A549 (cell line): ENCODE measurements at regions of chr12 and their contacts with region 1.

Region 1: DNA sequence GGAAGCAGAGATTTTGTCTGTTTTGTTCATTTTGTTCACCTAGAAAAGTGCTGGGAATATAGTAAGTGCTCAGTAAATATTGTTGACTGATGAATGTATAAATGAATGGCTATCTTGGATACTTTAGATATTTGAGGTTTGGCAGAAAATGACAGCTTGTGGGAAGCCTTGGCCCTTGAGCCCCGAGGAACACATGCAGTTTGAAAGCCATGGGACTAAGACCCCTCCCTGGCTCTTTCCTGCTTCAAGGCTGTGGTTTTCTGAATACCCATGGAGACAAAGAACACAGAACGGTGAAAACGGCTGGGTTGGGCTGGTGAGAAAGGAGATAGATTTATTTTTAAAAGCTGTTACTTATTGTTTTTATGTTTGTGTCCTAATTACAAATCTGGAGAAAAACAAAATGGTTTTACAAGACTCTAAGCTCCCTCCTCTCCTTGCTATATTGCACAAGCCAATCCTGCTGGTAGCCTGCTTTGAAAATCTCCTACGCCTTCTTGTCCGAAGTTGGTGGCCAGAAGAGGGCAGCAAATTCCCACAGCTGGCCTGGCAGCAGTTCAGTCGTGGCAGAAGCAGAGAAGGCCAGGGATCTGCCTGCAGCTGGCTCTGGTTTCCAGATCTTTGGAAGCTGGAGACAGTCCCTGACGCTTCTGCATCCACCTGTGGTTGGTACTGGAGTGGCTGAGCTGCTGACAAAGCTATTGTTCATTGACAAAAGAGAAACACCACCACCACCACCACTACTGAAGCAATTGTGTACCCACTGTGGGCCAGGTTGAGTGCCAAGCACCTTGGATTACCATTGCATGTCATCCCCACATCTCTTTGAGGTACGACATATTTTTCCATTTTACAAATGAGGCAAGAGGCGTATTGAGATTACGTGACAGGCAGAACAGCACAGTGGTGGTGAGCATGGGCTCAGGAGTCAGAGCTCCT is 5.2 kb upstream of the KRT85 start:
- DNase-seq: peak; percentile 93 to 95
- ATAC-seq: peak; percentile 95 to 97
- H3K4me3 ChIP-seq: no peak overlapping the region
- H3K27ac ChIP-seq: peak overlapping the region; percentile 34 to 67
- H3K4me1 ChIP-seq: peaks cover 10% of the 10 kb centered on the region; the same call in 1 of the 3 replicates
- CTCF ChIP-seq: peak; percentile 96
- EP300 ChIP-seq: no peak
- POLR2A ChIP-seq: no peak
- RAD21 ChIP-seq: peak; percentile 97 to 99

Region 2: DNA sequence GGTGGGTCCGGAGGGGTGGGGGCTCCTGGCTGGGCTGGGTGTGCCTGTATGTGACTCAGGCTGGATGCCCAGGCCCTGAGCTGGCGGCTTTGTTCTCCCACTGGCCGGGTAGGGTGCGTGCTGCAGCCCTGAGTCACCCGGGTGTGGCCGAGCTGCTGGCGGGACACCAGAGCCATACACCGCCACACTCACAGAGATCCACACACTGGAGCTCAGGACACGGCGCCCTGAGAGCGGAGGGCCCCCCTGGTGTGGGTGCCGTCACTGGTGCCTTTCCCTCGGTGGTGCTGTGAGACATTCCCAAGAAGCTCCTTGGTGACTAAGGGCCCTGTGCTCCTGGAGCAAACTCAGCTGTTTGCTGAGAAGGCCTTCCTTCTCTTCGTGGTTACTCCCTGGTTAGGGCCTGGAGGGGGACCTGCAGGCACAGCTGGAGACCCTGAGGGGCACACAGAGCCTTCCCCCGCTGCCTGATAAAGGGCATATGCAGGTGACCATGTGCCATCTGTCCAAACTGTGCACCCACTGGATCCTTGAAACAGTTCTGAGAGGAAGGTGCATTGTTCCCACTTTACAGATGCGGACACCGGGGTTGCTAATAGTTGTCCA is 225.0 kb before region 1 on chr12:
- CTCF ChIA-PET with region 1: interaction called, 23 read pairs
- POLR2A ChIA-PET with region 1: no interaction called
- DNase-seq: peak; percentile 96 to 100
- ATAC-seq: peak; percentile 46 to 71
- H3K4me3 ChIP-seq: no peak overlapping the region
- H3K27ac ChIP-seq: peak overlapping the region; percentile 100
- H3K4me1 ChIP-seq: peaks cover 93% of the 10 kb centered on the region
- CTCF ChIP-seq: no peak
- EP300 ChIP-seq: peak; percentile 97 to 99
- POLR2A ChIP-seq: no peak
- RAD21 ChIP-seq: peak in 1 of 2 experiments; percentile 42; a peak in 3 of 5 replicates

Region 3: GRCh38 chr12:52307836-52308805 is 64.4 kb before region 1 on chr12:
- CTCF ChIA-PET with region 1: interaction called, 11 read pairs
- POLR2A ChIA-PET with region 1: no interaction called
- DNase-seq: peak in 1 of 2 experiments; percentile 49
- ATAC-seq: peak; percentile 55 to 77
- H3K4me3 ChIP-seq: no peak overlapping the region
- H3K27ac ChIP-seq: peak overlapping the region; percentile 60 to 87
- H3K4me1 ChIP-seq: peaks cover 6% of the 10 kb centered on the region; the same call in 1 of the 3 replicates
- CTCF ChIP-seq: no peak
- EP300 ChIP-seq: no peak
- POLR2A ChIP-seq: no peak
- RAD21 ChIP-seq: no peak

Region 4: DNA sequence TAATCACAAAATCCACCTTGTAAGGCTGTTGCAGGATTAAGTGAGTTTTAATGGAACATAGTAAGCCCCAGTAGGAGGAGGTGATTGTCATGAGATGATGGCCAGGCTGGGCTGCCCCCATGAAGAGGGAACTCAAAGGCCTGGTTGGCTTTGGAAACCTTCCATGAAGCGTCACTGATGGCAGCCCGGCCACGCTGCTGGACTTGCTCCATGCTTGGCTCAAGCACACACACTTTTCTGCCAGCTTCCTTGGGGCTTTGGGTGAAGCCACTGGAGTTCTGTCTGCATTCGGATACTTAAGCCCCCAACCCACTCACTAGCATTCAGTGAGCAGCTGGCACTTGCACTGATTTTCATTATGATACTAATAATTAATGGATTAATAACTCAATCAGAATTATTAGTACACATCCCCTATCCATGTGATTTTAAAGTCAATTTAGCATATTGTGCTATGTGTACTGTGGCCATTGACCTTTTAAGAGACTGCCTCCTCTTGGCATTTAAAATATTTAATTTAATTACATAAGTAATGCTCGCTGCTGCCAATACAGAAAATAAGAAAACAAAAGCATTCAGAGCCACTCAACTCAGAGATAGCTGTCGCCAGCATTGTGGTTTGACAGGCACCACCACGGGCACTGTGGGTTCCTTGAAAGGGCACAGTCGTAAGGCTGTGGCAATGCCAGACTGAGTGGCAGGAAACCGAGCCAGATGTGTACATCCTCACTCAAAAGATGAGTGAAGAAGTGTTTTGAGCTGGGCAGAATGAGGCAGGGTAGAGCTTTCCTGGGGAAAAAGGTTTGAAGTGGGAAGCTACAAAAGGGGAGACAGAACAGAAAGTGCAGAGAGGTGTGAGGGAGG is 21.1 kb before region 1 on chr12:
- CTCF ChIA-PET with region 1: interaction called, 21 read pairs
- POLR2A ChIA-PET with region 1: no interaction called
- DNase-seq: no peak
- ATAC-seq: no peak
- H3K4me3 ChIP-seq: no peak overlapping the region
- H3K27ac ChIP-seq: no peak overlapping the region
- H3K4me1 ChIP-seq: peaks cover 1% of the 10 kb centered on the region; the same call in 1 of the 3 replicates
- CTCF ChIP-seq: no peak
- EP300 ChIP-seq: no peak
- POLR2A ChIP-seq: no peak
- RAD21 ChIP-seq: no peak

Region 5: GRCh38 chr12:52398176-52398829 is 25.8 kb after region 1 on chr12:
- CTCF ChIA-PET with region 1: interaction called, 24 read pairs
- POLR2A ChIA-PET with region 1: no interaction called
- DNase-seq: peak in 1 of 2 experiments; percentile 35
- ATAC-seq: peak in 1 of 2 experiments; percentile 40; a peak in 1 of 6 replicates
- H3K4me3 ChIP-seq: no peak overlapping the region
- H3K27ac ChIP-seq: no peak overlapping the region
- H3K4me1 ChIP-seq: peaks cover 6% of the 10 kb centered on the region; the same call in 1 of the 3 replicates
- CTCF ChIP-seq: no peak
- EP300 ChIP-seq: no peak
- POLR2A ChIP-seq: no peak
- RAD21 ChIP-seq: no peak

Region 6: DNA sequence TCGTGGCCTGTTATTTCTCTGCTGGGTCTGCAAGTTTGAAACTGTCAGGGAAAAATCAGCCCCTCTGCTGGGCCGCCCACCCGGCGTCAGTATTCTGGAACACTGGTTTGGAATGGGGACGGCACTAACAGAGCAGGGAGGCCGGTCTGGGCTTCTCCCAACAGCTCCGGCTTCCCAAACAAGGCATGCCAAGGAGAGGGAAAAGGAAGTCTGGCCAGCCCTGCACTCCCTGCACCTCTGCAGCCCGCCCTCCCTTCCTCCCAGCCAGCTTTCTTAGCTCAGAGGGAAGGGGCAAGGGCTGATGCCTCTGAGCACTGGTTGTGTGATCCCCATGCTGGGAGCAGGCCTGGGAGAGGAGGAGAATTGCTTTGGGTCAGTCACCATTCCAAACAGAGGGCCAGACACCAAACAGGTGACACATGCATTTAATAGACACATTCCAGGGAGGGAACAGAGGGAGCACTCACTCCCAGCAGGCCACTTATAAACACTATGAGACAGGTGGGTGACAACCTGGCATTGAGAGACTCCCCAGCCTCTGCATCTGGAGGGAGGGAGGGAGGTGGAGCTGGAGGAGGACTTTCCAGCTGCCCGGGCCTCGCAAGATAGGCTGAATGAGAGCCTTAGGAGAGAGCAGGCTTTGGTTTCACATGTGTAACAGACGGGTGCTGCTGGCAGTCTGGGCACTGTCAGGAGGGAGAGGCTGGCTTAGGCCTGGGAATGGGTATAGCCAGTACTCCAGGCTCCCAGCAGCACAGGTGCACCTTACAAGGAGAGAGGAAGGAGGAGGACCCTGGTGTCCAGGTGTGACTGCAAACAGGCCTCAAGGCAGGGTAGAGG is 51.4 kb after region 1 on chr12:
- CTCF ChIA-PET with region 1: no interaction called
- POLR2A ChIA-PET with region 1: no interaction called
- DNase-seq: no peak
- ATAC-seq: no peak; a peak in 1 of 6 replicates
- H3K4me3 ChIP-seq: no peak overlapping the region
- H3K27ac ChIP-seq: no peak overlapping the region
- H3K4me1 ChIP-seq: no peaks in the 10 kb centered on the region
- CTCF ChIP-seq: no peak
- EP300 ChIP-seq: no peak
- POLR2A ChIP-seq: no peak
- RAD21 ChIP-seq: no peak

Region 7: DNA sequence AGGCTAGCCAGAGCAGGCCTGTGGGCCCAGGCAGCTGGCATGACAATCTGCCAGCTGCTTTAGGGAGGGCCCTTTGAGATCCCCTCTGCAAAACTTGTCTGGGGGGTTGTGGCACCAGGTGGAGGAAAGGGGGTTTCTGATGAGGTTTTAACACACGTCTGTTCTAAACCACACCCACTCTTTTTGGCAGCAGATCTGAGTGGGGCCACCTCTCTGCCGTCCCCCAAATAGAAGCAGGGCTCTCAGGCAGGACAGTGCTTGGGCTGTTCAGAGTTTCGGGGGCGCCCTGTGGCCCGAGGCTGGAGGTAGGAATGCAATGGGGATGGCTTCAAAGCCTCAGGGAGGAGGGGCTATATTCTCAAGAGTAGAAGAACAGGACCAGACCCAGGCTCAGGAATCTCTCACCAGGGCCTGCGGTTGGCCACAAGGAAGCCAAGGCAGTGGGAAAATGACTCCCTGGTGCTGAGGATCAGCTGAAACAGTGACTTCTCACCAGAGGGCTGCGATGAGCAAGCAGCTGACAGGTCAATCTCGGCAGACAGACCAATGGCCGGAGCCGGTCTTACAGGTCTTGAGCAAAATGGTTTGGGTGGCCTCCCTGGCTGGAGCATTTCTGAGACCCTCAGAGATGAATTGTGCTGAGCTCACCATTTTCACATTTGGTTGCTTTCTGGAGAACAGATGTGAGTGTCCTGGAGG is 149.2 kb after region 1 on chr12:
- CTCF ChIA-PET with region 1: interaction called, 14 read pairs
- POLR2A ChIA-PET with region 1: no interaction called
- DNase-seq: no peak
- ATAC-seq: peak in 1 of 2 experiments; percentile 15; a peak in 1 of 6 replicates
- H3K4me3 ChIP-seq: no peak overlapping the region
- H3K27ac ChIP-seq: peak overlapping the region; percentile 2 to 61; a peak in 4 of 6 replicates
- H3K4me1 ChIP-seq: peaks cover 22% of the 10 kb centered on the region
- CTCF ChIP-seq: no peak
- EP300 ChIP-seq: no peak
- POLR2A ChIP-seq: no peak
- RAD21 ChIP-seq: no peak

Region 8: GRCh38 chr12:52582971-52583456 is 210.5 kb after region 1 on chr12:
- CTCF ChIA-PET with region 1: interaction called, 71 read pairs
- POLR2A ChIA-PET with region 1: no interaction called
- DNase-seq: peak; percentile 74 to 88
- ATAC-seq: peak; percentile 87 to 96
- H3K4me3 ChIP-seq: no peak overlapping the region
- H3K27ac ChIP-seq: peak overlapping the region; percentile 43 to 82
- H3K4me1 ChIP-seq: peaks cover 24% of the 10 kb centered on the region
- CTCF ChIP-seq: peak; percentile 85
- EP300 ChIP-seq: no peak
- POLR2A ChIP-seq: no peak
- RAD21 ChIP-seq: peak; percentile 94 to 97